HepG2 (cell line): ENCODE measurements at regions of chr20 and their contacts with region 1.

Region 1: GRCh38 chr20:16284743-16285100 is 288.5 kb downstream of the KIF16B start:
- DNase-seq: no peak
- ATAC-seq: no peak; the same call in 2 of the 3 replicates
- H3K4me3 ChIP-seq: no peak overlapping the region
- H3K27ac ChIP-seq: no peak overlapping the region
- H3K4me1 ChIP-seq: peaks cover 10% of the 10 kb centered on the region
- H3K27me3 ChIP-seq: no peaks in the 10 kb centered on the region
- CTCF ChIP-seq: no peak
- EP300 ChIP-seq: no peak
- POLR2A ChIP-seq: no peak
- RAD21 ChIP-seq: no peak

Region 2: GRCh38 chr20:16308754-16309153 is 24.0 kb after region 1 on chr20:
- CTCF ChIA-PET with region 1: no interaction called
- POLR2A ChIA-PET with region 1: no interaction called
- in situ Hi-C with region 1: no loop called
- intact Hi-C with region 1: no loop called
- DNase-seq: no peak
- ATAC-seq: no peak
- H3K4me3 ChIP-seq: no peak overlapping the region
- H3K27ac ChIP-seq: no peak overlapping the region
- H3K4me1 ChIP-seq: no peaks in the 10 kb centered on the region
- H3K27me3 ChIP-seq: no peaks in the 10 kb centered on the region
- CTCF ChIP-seq: no peak
- EP300 ChIP-seq: no peak
- POLR2A ChIP-seq: no peak
- RAD21 ChIP-seq: no peak

Region 3: DNA sequence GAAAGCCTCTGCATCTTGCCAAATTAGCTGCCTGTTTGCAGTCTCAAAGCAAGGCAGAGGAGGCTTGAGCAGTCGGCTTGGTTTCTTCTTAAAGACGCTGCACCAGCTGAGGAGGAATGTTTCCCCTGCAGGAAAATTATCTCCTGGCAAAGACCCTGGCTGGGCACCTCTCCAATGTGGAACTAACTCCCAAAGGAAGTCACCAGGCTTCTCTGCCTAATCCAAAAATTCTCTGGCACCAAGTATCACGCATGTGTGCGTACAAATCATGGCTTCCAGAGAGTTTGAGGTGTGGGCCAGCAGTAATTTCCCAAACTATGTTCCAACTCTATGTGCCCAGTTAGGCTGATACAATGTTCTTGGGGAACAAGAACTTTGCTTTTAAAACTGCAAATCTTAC is 112.4 kb after region 1 on chr20:
- CTCF ChIA-PET with region 1: no interaction called
- POLR2A ChIA-PET with region 1: no interaction called
- in situ Hi-C with region 1: no loop called
- intact Hi-C with region 1: no loop called
- DNase-seq: no peak
- ATAC-seq: no peak
- H3K4me3 ChIP-seq: no peak overlapping the region
- H3K27ac ChIP-seq: no peak overlapping the region
- H3K4me1 ChIP-seq: no peaks in the 10 kb centered on the region
- H3K27me3 ChIP-seq: no peaks in the 10 kb centered on the region
- CTCF ChIP-seq: no peak
- EP300 ChIP-seq: no peak
- POLR2A ChIP-seq: no peak
- RAD21 ChIP-seq: no peak

Region 4: GRCh38 chr20:16407251-16408067 is 122.7 kb after region 1 on chr20:
- CTCF ChIA-PET with region 1: no interaction called
- POLR2A ChIA-PET with region 1: no interaction called
- in situ Hi-C with region 1: no loop called
- intact Hi-C with region 1: loop called (anchors 5 kb)
- DNase-seq: peak; percentile 82
- ATAC-seq: peak; percentile 87
- H3K4me3 ChIP-seq: no peak overlapping the region
- H3K27ac ChIP-seq: peak overlapping the region; percentile 21
- H3K4me1 ChIP-seq: peaks cover 20% of the 10 kb centered on the region
- H3K27me3 ChIP-seq: no peaks in the 10 kb centered on the region
- CTCF ChIP-seq: no peak
- EP300 ChIP-seq: peak in 1 of 2 experiments; percentile 73; a peak in 2 of 4 replicates
- POLR2A ChIP-seq: no peak
- RAD21 ChIP-seq: no peak